CD8-positive, alpha-beta T cell (primary cell): ENCODE measurements at regions of chr17 and their contacts with region 1.

Region 1: DNA sequence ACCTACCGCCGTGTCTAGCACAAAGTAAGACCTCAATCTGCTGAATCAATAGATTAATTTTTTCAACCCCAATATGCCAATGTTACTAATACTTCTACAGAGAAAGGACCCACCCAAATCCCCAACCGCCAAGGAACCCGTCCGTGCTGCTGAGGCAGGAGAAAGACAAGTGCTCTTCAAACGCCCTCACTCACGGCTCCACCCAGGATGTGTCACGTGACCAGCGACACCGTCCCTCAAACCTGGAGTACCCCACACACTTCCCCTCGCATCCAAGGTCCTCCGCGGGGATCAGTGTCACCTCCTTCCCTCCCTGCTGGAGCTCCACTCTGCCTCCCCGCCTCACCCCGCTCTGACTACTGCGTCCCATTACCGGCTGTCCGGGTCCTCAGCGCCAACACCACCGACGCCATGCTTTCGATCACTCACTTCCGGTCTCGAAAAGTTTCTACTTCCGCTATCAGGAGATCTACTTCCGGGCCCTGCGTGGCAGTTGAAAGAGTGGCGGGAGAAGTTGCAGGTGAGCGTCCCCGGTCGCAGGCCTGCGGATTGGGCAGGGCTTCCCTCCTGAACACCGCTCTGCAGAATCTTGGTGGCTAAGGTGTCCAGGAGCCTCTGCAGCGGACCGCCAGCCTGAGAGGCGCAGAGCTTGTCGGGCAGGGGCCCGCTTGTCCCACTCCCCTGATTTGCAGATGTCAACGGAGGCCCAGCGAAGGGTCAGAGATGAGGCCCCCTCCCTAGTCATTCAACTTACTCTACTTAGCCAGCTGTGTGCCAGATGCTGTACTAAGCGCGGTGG is at the starts of genes EME1 and MRPL27:
- DNase-seq: peak; percentile 73 to 93 (median 87)
- ATAC-seq: peak; percentile 91
- H3K4me3 ChIP-seq: peak within 1 kb of the TSS; percentile 93 to 98
- H3K4me3 Mint-ChIP-seq: peak within 1 kb of the TSS; percentile 97
- H3K27ac ChIP-seq: peak within 1 kb of the TSS; percentile 98 to 99
- H3K27ac Mint-ChIP-seq: peak within 1 kb of the TSS; percentile 99
- H3K4me1 ChIP-seq: peaks cover 20% of the 10 kb centered on the region
- H3K4me1 Mint-ChIP-seq: peaks cover 28% of the 10 kb centered on the region
- H3K27me3 ChIP-seq: no peaks in the 10 kb centered on the region
- H3K27me3 Mint-ChIP-seq: no peaks in the 10 kb centered on the region
- CTCF ChIP-seq: no peak
- total RNA-seq, gene EME1: 0.53 to 0.60 TPM
- total RNA-seq, gene MRPL27: 28.6 to 30.8 TPM

Region 2: DNA sequence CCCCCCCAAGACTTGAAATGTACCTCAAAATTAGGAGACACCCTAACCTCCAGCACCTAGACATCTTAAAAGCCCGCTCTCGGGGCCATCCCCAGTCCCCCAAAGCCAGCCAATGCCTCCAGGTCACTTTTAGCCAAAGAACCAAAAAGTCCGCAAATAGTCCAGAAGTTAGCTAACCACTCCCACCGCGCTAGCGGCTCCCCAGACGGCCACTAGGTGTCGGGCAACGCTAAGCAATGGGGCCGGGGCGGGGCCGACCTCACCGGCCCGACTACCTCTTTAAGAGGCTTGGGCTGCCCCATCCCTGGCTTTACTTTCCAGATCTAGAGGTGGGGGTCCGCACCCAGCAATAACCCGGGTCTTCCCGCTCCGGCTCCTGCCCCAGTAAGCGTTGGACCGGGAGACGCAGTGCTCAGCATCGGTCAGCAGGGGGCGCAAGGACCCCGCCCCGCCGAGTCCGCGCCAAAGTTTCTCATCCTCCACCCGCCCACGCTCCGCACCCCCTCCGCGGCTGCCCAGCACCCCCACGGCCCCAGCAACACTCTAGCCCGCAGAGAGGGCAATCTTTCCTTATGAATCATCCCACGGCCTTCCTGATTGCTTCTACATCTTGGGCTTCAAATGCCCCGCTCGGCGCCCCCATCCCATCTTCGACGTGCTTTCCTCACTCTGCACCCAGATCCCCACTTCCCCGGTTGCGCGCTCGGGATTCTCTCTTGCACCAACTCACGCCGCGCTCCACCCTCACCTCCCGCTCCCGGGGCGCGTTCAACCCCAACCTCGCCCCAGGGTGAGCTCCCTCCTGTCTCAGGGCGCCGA is 172.3 kb before region 1 on chr17:
- CTCF ChIA-PET with region 1: no interaction called
- POLR2A ChIA-PET with region 1: no interaction called
- intact Hi-C with region 1: loop called in 1 of 2 experiments (anchors 1 kb)
- DNase-seq: peak; percentile 66 to 87 (median 80)
- ATAC-seq: peak; percentile 49
- H3K4me3 ChIP-seq: peak overlapping the region; percentile 47 to 49
- H3K4me3 Mint-ChIP-seq: peak overlapping the region; percentile 78
- H3K27ac ChIP-seq: no peak overlapping the region
- H3K27ac Mint-ChIP-seq: peak overlapping the region; percentile 11
- H3K4me1 ChIP-seq: peaks cover 21% of the 10 kb centered on the region
- H3K4me1 Mint-ChIP-seq: peaks cover 25% of the 10 kb centered on the region
- H3K27me3 ChIP-seq: peaks cover 12 to 20% of the 10 kb centered on the region in 2 experiments
- H3K27me3 Mint-ChIP-seq: peaks cover 42% of the 10 kb centered on the region
- CTCF ChIP-seq: peak; percentile 100

Region 3: DNA sequence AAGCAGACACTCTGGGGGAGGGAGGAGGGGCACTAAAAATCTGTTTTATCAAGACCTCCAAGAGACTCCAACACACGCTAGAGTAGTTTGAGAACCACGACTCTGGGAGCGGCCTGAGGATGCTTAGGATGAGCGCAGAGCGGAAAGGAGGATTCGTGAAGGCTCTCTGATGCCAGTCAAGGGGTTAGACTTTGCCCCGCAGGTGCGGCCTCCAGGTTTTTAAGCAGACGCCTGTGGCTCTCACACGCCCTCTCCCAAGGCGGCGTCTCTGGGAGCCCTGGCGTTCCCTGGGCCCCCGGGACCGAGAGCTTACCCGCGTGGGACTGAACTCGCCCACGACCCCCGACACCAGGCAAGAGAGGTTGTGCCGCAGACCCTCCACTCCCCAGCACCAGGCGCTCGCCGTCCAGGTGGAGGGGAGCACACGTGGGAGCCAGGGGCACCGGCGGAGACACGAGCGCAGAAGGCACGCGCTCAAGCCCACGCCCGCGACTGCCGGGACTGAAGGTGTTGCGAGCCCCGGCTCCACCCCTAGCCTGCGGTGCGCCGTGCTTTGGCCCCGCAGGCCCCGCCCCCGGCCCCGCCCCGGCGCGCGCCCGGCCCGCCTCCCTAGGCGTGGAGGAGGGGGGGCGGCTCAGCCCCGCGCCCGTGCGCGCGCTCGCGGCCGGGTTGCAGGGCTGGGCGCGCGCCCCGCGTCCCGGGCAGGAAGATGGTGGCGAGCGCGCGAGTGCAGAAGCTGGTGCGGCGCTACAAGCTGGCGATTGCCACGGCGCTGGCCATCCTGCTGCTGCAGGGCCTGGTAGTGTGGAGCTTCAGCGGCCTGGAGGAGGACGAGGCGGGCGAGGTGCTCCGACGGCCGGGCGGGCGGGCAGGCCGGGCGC is 27.3 kb before region 1 on chr17 and contains the start of gene XYLT2:
- CTCF ChIA-PET with region 1: no interaction called
- POLR2A ChIA-PET with region 1: interaction called, 7 read pairs
- intact Hi-C with region 1: loop called (anchors 1 to 2 kb)
- DNase-seq: peak; percentile 83 to 96 (median 93)
- ATAC-seq: peak; percentile 94
- H3K4me3 ChIP-seq: peak within 1 kb of the TSS; percentile 78 to 90
- H3K4me3 Mint-ChIP-seq: peak within 1 kb of the TSS; percentile 93
- H3K27ac ChIP-seq: peak within 1 kb of the TSS; percentile 56 to 77
- H3K27ac Mint-ChIP-seq: peak within 1 kb of the TSS; percentile 91
- H3K4me1 ChIP-seq: peaks cover 29% of the 10 kb centered on the region
- H3K4me1 Mint-ChIP-seq: peaks cover 37% of the 10 kb centered on the region
- H3K27me3 ChIP-seq: no peaks in the 10 kb centered on the region
- H3K27me3 Mint-ChIP-seq: no peaks in the 10 kb centered on the region
- CTCF ChIP-seq: no peak
- total RNA-seq, gene XYLT2: 9.0 to 9.4 TPM

Region 4: GRCh38 chr17:50361561-50362480 is 11.1 kb before region 1 on chr17:
- CTCF ChIA-PET with region 1: interaction called, 41 read pairs
- POLR2A ChIA-PET with region 1: interaction called, 11 read pairs
- intact Hi-C with region 1: loop called in 1 of 2 experiments (anchors 1 kb)
- DNase-seq: peak in 8 of 9 experiments; percentile 32 to 83 (median 59)
- ATAC-seq: peak; percentile 94
- H3K4me3 ChIP-seq: no peak overlapping the region
- H3K4me3 Mint-ChIP-seq: peak overlapping the region; percentile 49
- H3K27ac ChIP-seq: peak overlapping the region in 1 of 2 experiments; percentile 32
- H3K27ac Mint-ChIP-seq: peak overlapping the region; percentile 70
- H3K4me1 ChIP-seq: peaks cover 6% of the 10 kb centered on the region
- H3K4me1 Mint-ChIP-seq: peaks cover 22% of the 10 kb centered on the region
- H3K27me3 ChIP-seq: no peaks in the 10 kb centered on the region
- H3K27me3 Mint-ChIP-seq: no peaks in the 10 kb centered on the region
- CTCF ChIP-seq: peak; percentile 79

Region 5: DNA sequence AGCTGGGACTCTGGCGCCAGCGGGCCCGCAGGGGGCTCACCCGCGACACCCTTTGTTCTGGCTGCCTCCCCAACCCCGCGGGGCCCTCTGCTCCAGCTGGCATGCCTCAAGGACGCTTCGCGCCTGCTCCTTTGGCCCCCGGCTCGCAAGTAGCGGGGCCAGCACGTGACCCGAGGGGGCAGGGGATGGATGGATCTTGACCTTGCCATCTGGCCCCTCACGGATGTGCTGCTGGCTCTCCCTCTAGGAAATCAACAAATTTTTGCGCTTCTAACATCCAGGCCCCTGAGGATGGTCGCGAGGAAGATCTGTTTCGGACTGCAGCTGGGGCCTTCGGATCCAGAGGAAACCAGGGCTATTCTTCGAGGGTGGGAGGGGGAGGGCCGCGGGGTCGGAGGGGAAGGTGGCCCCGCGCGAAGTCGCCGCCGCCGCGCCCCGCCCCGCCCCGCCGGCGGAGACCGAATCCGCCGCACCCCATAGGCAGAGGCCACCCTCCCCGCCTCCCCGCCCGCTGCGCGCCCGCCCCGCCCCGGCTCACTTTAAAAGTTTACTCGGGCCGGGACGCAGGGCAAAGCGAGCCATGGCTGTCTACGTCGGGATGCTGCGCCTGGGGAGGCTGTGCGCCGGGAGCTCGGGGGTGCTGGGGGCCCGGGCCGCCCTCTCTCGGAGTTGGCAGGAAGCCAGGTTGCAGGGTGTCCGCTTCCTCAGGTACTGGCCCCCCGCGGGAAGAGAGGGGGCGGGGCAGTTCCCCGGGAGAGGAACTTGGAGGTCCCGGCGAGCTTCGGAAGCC is 52.9 kb after region 1 on chr17 and contains the start of gene ACSF2:
- CTCF ChIA-PET with region 1: no interaction called
- POLR2A ChIA-PET with region 1: interaction called, 3 read pairs
- intact Hi-C with region 1: loop called in 1 of 2 experiments (anchors 10 kb)
- DNase-seq: peak; percentile 39 to 79 (median 67)
- ATAC-seq: peak; percentile 85
- H3K4me3 ChIP-seq: peak within 1 kb of the TSS; percentile 76 to 77
- H3K4me3 Mint-ChIP-seq: peak within 1 kb of the TSS; percentile 87
- H3K27ac ChIP-seq: peak within 1 kb of the TSS; percentile 21 to 75
- H3K27ac Mint-ChIP-seq: peak within 1 kb of the TSS; percentile 79
- H3K4me1 ChIP-seq: peaks cover 28% of the 10 kb centered on the region
- H3K4me1 Mint-ChIP-seq: peaks cover 35% of the 10 kb centered on the region
- H3K27me3 ChIP-seq: no peaks in the 10 kb centered on the region
- H3K27me3 Mint-ChIP-seq: no peaks in the 10 kb centered on the region
- CTCF ChIP-seq: no peak
- total RNA-seq, gene ACSF2: 12.5 to 12.9 TPM